ENCODE measurements at regions of chr2 and their contacts with region 1.

Region 1: DNA sequence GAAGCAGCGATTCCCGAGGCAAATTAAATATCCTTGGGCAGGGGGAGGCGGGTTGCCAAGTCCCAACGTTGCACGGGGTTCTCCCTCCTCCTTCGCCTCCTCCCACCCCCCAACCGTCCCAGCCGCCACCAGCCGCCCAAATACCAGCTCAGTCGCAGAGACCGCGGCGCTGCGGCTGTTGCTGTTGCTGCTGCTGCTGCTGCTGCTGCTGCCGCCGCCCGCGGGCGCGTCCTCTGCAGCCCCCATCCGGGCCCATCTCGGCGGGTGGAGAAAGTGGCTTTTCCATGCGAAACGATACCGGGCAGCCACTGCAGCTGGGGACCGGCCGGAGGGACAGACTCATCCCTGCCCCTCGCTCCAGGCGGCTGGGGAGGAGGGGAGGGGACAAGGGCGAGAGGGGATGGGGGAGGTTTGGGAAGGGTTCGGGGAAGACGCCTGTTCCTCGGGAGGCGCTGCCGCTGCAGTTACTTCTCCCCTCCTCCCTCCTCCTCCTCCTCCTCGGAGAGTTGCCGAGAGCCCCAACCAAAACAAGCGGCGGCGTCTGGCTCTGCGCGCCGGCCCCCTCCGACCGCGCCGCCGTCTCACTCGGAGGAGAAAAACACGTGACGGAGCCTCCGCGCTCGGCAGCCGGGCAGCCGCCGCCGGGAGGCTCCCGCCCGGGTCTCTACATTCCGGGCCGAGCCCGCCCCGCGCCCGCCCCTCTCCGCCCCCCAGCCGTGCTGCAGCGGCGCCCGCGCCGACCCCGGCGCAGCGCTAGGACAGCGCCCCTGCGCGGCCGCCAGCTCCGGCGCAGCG is at the start of gene IRS1:
- DNase-seq: peak; percentile 73
- H3K4me3 ChIP-seq: peak within 1 kb of the TSS; percentile 81
- H3K4me3 Mint-ChIP-seq: peak within 1 kb of the TSS; percentile 85
- H3K27ac Mint-ChIP-seq: peak within 1 kb of the TSS; percentile 71
- H3K4me1 ChIP-seq: peaks cover 28% of the 10 kb centered on the region
- H3K4me1 Mint-ChIP-seq: peaks cover 9% of the 10 kb centered on the region
- H3K27me3 ChIP-seq: no peaks in the 10 kb centered on the region
- H3K27me3 Mint-ChIP-seq: no peaks in the 10 kb centered on the region
- CTCF ChIP-seq: peak in 1 of 2 experiments; percentile 17
- total RNA-seq, gene IRS1: 27.9 and 32.4 TPM in 2 replicates

Region 2: DNA sequence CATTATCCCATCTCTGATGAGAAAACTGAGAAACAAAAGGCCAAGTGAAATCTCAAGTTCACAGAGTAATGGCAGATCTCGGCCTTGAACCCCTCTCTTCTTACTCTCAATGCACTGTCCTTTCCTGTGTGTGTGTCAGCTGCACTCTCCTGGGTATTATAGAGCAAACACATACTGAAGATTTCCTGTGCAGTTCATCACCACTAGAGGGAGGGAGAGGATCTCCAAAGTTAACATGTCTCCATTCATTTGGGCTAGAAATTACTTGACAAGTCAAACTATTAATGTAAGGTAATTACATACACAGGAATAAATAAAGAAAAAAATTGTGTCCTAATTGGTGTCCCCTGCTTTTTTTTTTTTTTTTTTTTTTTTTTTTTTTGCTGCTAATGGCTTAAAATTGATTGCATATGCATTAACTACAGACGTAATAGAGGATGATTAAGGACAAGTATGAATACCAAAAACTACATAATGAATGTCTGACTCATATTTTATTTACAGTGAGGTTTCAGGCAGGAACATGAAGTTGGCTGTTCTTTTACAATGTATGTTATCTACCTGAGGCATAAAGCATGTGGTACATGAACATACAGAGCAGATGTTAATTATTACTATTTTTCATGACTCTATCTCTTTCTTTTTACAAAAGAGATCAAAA is 1130.6 kb before region 1 on chr2:
- CTCF ChIA-PET with region 1: interaction called, 4 read pairs
- POLR2A ChIA-PET with region 1: no interaction called
- intact Hi-C with region 1: loop called (anchors 1 kb)
- DNase-seq: peak in 1 of 2 experiments; percentile 33
- H3K4me3 ChIP-seq: no peak overlapping the region
- H3K4me3 Mint-ChIP-seq: no peak overlapping the region
- H3K27ac Mint-ChIP-seq: no peak overlapping the region
- H3K4me1 ChIP-seq: no peaks in the 10 kb centered on the region
- H3K4me1 Mint-ChIP-seq: no peaks in the 10 kb centered on the region
- H3K27me3 ChIP-seq: no peaks in the 10 kb centered on the region
- H3K27me3 Mint-ChIP-seq: peaks cover 6% of the 10 kb centered on the region
- CTCF ChIP-seq: peak; percentile 37 to 64

Region 3: DNA sequence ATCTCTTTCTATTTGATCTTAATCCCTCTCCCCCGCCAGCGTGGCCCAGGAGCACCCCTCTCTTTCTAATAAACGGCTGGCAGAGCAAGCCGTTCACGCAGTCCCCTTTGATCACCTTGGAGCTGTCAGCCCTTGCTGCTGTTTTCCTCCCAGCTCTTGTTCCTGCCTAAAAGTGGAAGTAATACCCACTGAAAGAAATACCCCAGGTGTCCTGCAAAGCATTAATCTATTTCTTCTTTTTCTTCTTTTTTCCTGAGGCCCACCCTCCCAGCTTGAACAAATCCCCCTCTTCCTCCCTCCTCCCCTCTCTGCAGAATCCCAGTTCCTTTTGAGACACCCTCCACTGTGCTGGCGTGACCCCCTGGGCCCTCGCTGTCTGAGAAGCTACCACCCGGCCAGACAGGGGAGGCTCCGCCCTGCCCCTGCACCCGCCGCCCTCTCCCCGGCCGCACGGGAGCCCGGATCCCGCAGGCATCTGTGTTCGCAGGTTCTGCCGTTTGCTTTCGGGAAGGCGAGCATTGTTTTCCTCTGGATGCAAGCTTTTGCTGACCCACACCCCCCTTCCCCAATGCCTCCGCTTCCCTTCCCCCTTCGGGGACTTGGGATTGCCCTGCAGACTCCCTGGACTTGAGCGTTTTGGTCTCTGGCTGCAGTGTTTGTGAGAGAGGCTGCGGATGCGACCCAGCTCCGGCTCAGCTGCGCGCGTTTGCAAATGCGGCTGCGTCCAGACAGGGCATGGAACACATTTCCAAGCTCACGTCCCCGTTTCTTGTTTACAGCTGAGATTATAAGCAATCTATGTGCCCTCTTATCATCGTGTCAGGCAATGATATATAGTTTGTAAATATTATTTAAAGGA is 768.4 kb before region 1 on chr2:
- CTCF ChIA-PET with region 1: no interaction called
- POLR2A ChIA-PET with region 1: no interaction called
- intact Hi-C with region 1: loop called (anchors 5 kb)
- DNase-seq: peak; percentile 59 to 67
- H3K4me3 ChIP-seq: peak overlapping the region; percentile 59
- H3K4me3 Mint-ChIP-seq: peak overlapping the region; percentile 77
- H3K27ac Mint-ChIP-seq: no peak overlapping the region
- H3K4me1 ChIP-seq: no peaks in the 10 kb centered on the region
- H3K4me1 Mint-ChIP-seq: peaks cover 9% of the 10 kb centered on the region
- H3K27me3 ChIP-seq: no peaks in the 10 kb centered on the region
- H3K27me3 Mint-ChIP-seq: no peaks in the 10 kb centered on the region
- CTCF ChIP-seq: no peak

Region 4: GRCh38 chr2:226478109-226478809 is 321.1 kb before region 1 on chr2:
- CTCF ChIA-PET with region 1: interaction called, 3 read pairs
- POLR2A ChIA-PET with region 1: interaction called, 3 read pairs
- intact Hi-C with region 1: loop called (anchors 1 kb)
- DNase-seq: peak; percentile 79 to 90
- H3K4me3 ChIP-seq: no peak overlapping the region
- H3K4me3 Mint-ChIP-seq: peak overlapping the region; percentile 49
- H3K27ac Mint-ChIP-seq: peak overlapping the region; percentile 96
- H3K4me1 ChIP-seq: peaks cover 91% of the 10 kb centered on the region
- H3K4me1 Mint-ChIP-seq: peaks cover 32% of the 10 kb centered on the region
- H3K27me3 ChIP-seq: no peaks in the 10 kb centered on the region
- H3K27me3 Mint-ChIP-seq: no peaks in the 10 kb centered on the region
- CTCF ChIP-seq: no peak

Region 5: GRCh38 chr2:226649871-226650660 is 149.3 kb before region 1 on chr2:
- CTCF ChIA-PET with region 1: no interaction called
- POLR2A ChIA-PET with region 1: no interaction called
- intact Hi-C with region 1: no loop called
- DNase-seq: no peak
- H3K4me3 ChIP-seq: no peak overlapping the region
- H3K4me3 Mint-ChIP-seq: no peak overlapping the region
- H3K27ac Mint-ChIP-seq: no peak overlapping the region
- H3K4me1 ChIP-seq: no peaks in the 10 kb centered on the region
- H3K4me1 Mint-ChIP-seq: no peaks in the 10 kb centered on the region
- H3K27me3 ChIP-seq: no peaks in the 10 kb centered on the region
- H3K27me3 Mint-ChIP-seq: no peaks in the 10 kb centered on the region
- CTCF ChIP-seq: no peak

Region 6: GRCh38 chr2:226835796-226836547 is 36.6 kb after region 1 on chr2 and contains the start of gene RHBDD1:
- CTCF ChIA-PET with region 1: no interaction called
- POLR2A ChIA-PET with region 1: no interaction called
- intact Hi-C with region 1: loop called (anchors 1 kb)
- DNase-seq: peak; percentile 92 to 93
- H3K4me3 ChIP-seq: peak within 1 kb of the TSS; percentile 59
- H3K4me3 Mint-ChIP-seq: peak within 1 kb of the TSS; percentile 90
- H3K27ac Mint-ChIP-seq: peak within 1 kb of the TSS; percentile 94
- H3K4me1 ChIP-seq: peaks cover 12% of the 10 kb centered on the region; the same call in 1 of the 2 replicates
- H3K4me1 Mint-ChIP-seq: no peaks in the 10 kb centered on the region
- H3K27me3 ChIP-seq: no peaks in the 10 kb centered on the region
- H3K27me3 Mint-ChIP-seq: no peaks in the 10 kb centered on the region
- CTCF ChIP-seq: no peak
- total RNA-seq, gene RHBDD1: 14.3 and 16.5 TPM in 2 replicates

Region 7: GRCh38 chr2:227095346-227095745 is 296.0 kb after region 1 on chr2:
- CTCF ChIA-PET with region 1: no interaction called
- POLR2A ChIA-PET with region 1: no interaction called
- intact Hi-C with region 1: no loop called
- DNase-seq: no peak
- H3K4me3 ChIP-seq: no peak overlapping the region
- H3K4me3 Mint-ChIP-seq: no peak overlapping the region
- H3K27ac Mint-ChIP-seq: no peak overlapping the region
- H3K4me1 ChIP-seq: no peaks in the 10 kb centered on the region
- H3K4me1 Mint-ChIP-seq: no peaks in the 10 kb centered on the region
- H3K27me3 ChIP-seq: no peaks in the 10 kb centered on the region
- H3K27me3 Mint-ChIP-seq: no peaks in the 10 kb centered on the region
- CTCF ChIP-seq: no peak

Region 8: DNA sequence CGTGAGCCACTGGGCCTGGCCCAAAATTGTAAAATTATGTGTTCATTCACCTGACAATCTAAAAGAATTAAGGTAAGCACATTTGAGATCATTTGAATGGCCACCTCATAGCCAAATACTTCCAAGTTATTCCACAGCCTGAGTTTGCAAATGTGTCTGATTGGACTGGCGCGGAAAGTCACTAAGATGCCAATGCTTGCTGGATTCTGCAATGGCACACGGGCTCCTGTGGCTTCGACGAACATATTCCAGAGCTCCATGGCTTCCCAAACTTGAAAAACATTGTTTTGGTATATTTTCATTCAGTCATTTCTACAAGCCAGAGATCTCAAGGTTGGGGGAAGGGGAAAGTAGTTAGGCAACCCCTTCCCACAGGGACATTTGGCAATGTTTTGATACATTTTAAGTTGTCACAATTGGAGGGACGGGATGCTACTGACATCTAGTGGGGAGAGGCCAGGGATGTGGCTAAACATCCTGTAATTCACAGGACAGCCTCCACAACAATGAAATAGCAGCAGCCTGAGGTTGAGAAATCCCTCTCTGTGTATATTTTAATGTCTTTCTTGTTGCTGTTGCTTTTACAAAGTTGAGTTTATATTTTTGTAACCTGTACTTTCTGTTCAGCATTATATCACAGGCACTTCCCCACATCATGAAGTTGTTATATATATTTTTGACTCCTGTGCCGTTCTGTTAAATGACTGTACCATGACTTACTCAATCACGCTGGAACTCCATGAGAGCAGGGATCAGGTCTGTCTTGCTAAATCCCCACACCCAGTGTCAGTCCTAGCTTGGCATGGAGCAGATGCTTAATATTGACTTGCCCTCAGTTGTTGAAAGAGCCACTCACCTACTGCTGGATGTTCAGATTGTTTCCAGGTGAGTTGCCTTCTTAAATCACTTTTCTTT is 307.7 kb after region 1 on chr2:
- CTCF ChIA-PET with region 1: no interaction called
- POLR2A ChIA-PET with region 1: no interaction called
- intact Hi-C with region 1: loop called (anchors 1 kb)
- DNase-seq: peak; percentile 51 to 70
- H3K4me3 ChIP-seq: no peak overlapping the region
- H3K4me3 Mint-ChIP-seq: no peak overlapping the region
- H3K27ac Mint-ChIP-seq: no peak overlapping the region
- H3K4me1 ChIP-seq: no peaks in the 10 kb centered on the region
- H3K4me1 Mint-ChIP-seq: no peaks in the 10 kb centered on the region
- H3K27me3 ChIP-seq: no peaks in the 10 kb centered on the region
- H3K27me3 Mint-ChIP-seq: no peaks in the 10 kb centered on the region
- CTCF ChIP-seq: peak; percentile 56 to 71

Measured in Caco-2 (cell line).